Activated CD8-positive, alpha-beta T cell treated with anti-CD3 and anti-CD28 coated beads, Interleukin-2, amount 10 ng/mL, durations not matched to agents 7 days and 5 days (primary cell): ENCODE measurements at regions of chr2 and their contacts with region 1.

Region 1: DNA sequence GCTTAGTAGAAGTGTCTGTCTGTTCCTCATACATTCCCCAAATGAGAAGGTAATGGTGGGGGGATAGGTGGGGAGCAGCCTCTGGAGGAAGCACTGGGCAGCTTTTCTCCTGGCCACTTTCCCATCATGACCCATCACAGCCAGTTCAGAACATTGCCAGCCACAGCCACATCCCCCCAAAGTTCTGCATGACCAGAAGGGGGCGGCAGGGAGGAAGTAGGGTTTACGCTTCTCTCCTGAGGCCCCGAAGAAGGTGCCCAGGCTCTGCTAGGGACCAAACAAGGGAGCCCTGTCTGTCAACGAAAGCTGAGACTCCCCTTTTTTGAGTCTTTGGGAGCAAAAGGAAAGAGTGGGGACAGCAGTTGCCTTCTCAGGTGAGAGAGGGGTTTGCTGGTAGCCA is 7.7 kb downstream of the IGFBP5 start:
- DNase-seq: peak; percentile 53
- ATAC-seq: no peak
- H3K4me3 Mint-ChIP-seq: no peak overlapping the region
- H3K27ac Mint-ChIP-seq: no peak overlapping the region
- H3K4me1 Mint-ChIP-seq: peaks cover 16% of the 10 kb centered on the region
- H3K27me3 Mint-ChIP-seq: peaks cover 45% of the 10 kb centered on the region

Region 2: GRCh38 chr2:216653931-216654365 is 33.7 kb before region 1 on chr2:
- CTCF ChIA-PET with region 1: no interaction called
- POLR2A ChIA-PET with region 1: no interaction called
- DNase-seq: peak; percentile 36
- ATAC-seq: no peak
- H3K4me3 Mint-ChIP-seq: no peak overlapping the region
- H3K27ac Mint-ChIP-seq: no peak overlapping the region
- H3K4me1 Mint-ChIP-seq: peaks cover 11% of the 10 kb centered on the region
- H3K27me3 Mint-ChIP-seq: no peaks in the 10 kb centered on the region

Region 3: DNA sequence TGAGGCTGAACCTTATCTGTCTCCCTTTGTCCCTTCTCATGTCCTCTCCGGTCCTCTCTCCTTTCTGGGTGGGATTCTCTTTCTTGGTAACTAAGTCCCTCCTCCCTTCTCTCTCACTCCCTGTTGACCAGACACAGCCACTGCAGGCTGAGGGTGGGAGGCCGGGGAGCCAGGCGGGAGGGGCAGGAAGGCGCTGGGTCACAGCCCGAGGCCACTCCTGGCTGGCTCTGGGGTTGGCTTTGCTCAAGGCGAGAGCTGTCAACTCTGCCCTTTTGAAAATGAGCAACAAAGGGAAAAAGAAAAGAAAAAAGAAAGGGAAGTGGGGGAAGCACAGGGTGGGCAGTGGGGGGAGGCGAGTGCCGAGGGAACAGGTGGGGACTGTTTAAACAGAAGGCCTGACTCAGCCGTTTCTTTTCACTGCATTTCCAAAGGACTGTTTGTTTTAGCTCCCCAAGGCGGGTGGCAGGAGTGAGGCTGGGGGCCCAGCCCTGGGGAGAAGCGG is 78.2 kb after region 1 on chr2:
- CTCF ChIA-PET with region 1: no interaction called
- POLR2A ChIA-PET with region 1: no interaction called
- DNase-seq: no peak
- ATAC-seq: no peak
- H3K4me3 Mint-ChIP-seq: no peak overlapping the region
- H3K27ac Mint-ChIP-seq: no peak overlapping the region
- H3K4me1 Mint-ChIP-seq: no peaks in the 10 kb centered on the region
- H3K27me3 Mint-ChIP-seq: peaks cover 30% of the 10 kb centered on the region

Region 4: DNA sequence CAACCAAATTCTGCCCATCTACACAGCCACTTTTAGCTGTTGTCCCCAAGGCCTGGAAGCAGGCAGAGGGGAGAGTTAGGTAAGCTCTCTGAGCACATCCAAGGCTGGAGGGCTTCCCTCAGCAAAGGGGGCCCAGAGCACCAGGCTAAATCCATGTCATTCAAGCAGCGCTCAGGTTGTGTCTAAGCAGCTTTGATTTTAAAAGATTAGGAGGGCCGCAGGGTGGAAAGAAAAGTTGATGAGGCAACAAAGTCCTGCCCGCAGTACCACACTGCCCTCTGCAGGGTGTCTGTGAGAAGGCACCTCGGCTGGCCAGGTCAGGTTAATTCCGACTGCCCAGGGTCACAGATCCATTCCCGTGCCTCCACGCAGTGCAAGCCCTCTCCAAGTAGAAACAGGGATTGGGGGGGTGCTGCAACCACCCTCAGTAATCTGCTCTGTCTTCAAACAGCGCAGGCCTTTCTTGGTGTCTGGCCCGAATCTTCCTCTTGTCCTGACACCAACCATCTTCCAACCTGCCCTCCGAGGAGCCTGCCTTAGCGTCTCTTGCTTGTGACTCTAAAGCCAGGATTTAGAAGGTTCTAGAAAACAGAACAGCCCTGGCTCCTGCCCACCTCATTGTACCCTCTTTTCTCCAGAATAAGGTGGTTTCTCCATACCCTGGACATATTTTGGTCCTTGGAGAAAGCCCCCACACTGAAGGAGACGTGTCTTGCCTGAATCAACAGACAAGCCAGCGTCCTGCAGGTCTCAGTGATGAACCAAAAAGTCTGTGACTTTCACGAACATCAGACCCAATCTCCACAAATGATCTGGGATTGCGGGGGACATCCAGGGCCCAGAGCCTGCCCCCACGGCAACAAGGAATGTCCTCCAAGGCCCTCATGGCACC is 1026.0 kb after region 1 on chr2:
- CTCF ChIA-PET with region 1: interaction called, 10 read pairs
- POLR2A ChIA-PET with region 1: no interaction called
- DNase-seq: peak; percentile 81
- ATAC-seq: peak; percentile 84
- H3K4me3 Mint-ChIP-seq: no peak overlapping the region
- H3K27ac Mint-ChIP-seq: no peak overlapping the region
- H3K4me1 Mint-ChIP-seq: peaks cover 5% of the 10 kb centered on the region
- H3K27me3 Mint-ChIP-seq: peaks cover 3% of the 10 kb centered on the region